ENCODE measurements at regions of chr6 and their contacts with region 1.

Region 1: GRCh38 chr6:75368151-75368779 is 83.7 kb upstream of the TMEM30A start:
- DNase-seq: peak; percentile 77
- H3K4me3 Mint-ChIP-seq: no peak overlapping the region
- H3K27ac Mint-ChIP-seq: no peak overlapping the region
- H3K4me1 Mint-ChIP-seq: peaks cover 10% of the 10 kb centered on the region
- H3K27me3 Mint-ChIP-seq: no peaks in the 10 kb centered on the region
- CTCF ChIP-seq: peak; percentile 79

Region 2: DNA sequence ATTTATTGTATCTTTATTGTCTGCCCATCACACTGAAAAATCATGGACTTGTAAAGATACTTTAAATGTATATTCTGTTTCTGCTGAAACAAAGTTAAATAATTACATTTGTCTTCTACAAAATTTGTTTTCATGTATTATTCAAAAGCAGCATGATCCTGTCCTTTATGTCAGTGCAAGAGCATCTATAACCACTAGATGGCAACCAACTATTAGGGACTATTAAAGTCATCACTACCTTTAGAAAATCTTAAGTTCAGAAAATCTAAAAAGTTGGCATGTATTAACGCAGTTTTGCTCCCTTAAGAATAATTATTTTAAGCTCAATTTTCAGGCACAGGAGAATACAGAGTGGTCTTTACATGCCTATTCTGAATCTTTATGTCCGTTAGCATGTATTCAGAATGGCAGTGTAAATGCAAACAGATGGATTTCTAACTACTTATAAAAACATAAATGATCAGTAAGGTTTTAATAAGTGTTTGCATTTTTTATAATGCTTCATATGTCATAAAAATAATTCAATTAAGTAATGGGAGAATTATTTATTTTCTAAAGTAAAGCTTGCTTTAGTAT is 101.5 kb before region 1 on chr6:
- CTCF ChIA-PET with region 1: no interaction called
- intact Hi-C with region 1: loop called (anchors 2 kb)
- DNase-seq: no peak
- H3K4me3 Mint-ChIP-seq: no peak overlapping the region
- H3K27ac Mint-ChIP-seq: no peak overlapping the region
- H3K4me1 Mint-ChIP-seq: peaks cover 14% of the 10 kb centered on the region
- H3K27me3 Mint-ChIP-seq: no peaks in the 10 kb centered on the region
- CTCF ChIP-seq: peak; percentile 62

Region 3: GRCh38 chr6:75296811-75297779 is 71.2 kb before region 1 on chr6:
- CTCF ChIA-PET with region 1: interaction called, 11 read pairs
- intact Hi-C with region 1: loop called (anchors 2 kb)
- DNase-seq: peak; percentile 15
- H3K4me3 Mint-ChIP-seq: no peak overlapping the region
- H3K27ac Mint-ChIP-seq: no peak overlapping the region
- H3K4me1 Mint-ChIP-seq: no peaks in the 10 kb centered on the region
- H3K27me3 Mint-ChIP-seq: no peaks in the 10 kb centered on the region
- CTCF ChIP-seq: peak; percentile 68

Region 4: DNA sequence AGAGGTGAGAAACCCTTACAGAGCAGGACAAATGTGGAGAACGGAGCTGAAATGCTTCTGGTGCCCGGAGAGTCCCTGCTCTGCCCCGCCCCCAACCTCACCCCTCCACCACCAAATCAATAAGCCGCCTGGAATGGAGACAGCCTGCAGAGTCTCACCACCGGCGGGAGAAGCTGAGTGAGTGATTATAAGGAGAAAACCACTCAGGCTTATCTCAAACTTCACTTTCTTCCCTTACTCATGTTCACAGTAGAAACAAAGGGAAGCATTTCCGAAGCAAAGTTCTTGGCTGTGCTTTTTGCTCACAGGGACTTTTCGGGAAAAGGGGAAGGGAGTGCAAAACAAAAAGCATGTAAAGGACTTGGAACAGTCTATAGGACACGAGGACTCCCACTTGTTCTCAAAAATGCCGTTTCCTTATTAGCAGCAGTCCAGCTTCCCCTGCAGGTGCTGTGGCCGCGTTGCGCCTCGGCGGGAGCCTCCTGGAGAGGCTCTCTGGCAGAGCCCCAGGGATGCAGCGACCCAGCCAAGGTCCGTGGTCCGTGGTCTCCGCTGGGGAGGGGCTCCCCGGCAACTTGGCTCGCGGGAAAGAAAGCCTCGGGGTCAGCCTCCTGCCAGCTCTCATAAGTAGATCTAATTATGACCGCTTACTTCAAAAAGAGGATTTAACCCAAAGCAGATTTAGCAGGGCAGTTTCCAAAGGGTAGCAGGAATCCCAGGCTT is 18.8 kb before region 1 on chr6:
- CTCF ChIA-PET with region 1: no interaction called
- intact Hi-C with region 1: loop called (anchors 1 kb)
- DNase-seq: peak; percentile 58
- H3K4me3 Mint-ChIP-seq: peak overlapping the region; percentile 80
- H3K27ac Mint-ChIP-seq: no peak overlapping the region
- H3K4me1 Mint-ChIP-seq: peaks cover 16% of the 10 kb centered on the region
- H3K27me3 Mint-ChIP-seq: no peaks in the 10 kb centered on the region
- CTCF ChIP-seq: no peak